ENCODE measurements at regions of chr13 and their contacts with region 1.

Region 1: GRCh38 chr13:39777527-39778061 is 122.1 kb downstream of the COG6 start:
- DNase-seq: no peak
- H3K4me3 Mint-ChIP-seq: no peak overlapping the region
- H3K27ac Mint-ChIP-seq: peak overlapping the region; percentile 86
- H3K4me1 Mint-ChIP-seq: peaks cover 50% of the 10 kb centered on the region
- H3K27me3 Mint-ChIP-seq: no peaks in the 10 kb centered on the region

Region 2: GRCh38 chr13:39684531-39685137 is 93.0 kb before region 1 on chr13:
- intact Hi-C with region 1: loop called (anchors 1 kb)
- DNase-seq: no peak
- H3K4me3 Mint-ChIP-seq: no peak overlapping the region
- H3K27ac Mint-ChIP-seq: no peak overlapping the region
- H3K4me1 Mint-ChIP-seq: peaks cover 27% of the 10 kb centered on the region
- H3K27me3 Mint-ChIP-seq: no peaks in the 10 kb centered on the region

Region 3: DNA sequence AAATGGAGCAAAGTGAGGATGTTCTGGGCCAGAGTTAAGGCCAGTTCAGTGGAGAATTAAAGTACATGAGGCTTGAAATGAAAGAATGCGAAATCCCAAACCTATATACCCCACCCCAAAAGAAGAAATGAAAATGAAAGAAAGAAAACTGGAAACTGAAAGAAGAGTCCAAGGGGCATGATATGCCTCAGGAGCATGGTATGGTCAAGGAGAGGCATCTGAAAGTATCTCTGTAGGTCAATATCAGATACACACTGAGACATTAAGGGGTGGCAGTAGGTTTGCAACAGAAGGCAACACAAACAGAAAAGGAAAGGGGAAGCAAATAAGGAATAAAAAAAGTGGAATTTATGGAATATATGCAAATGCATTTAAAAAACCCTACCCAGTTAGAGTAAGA is 44.4 kb after region 1 on chr13:
- intact Hi-C with region 1: loop called (anchors 1 kb)
- DNase-seq: no peak
- H3K4me3 Mint-ChIP-seq: no peak overlapping the region
- H3K27ac Mint-ChIP-seq: no peak overlapping the region
- H3K4me1 Mint-ChIP-seq: peaks cover 21% of the 10 kb centered on the region
- H3K27me3 Mint-ChIP-seq: no peaks in the 10 kb centered on the region

Region 4: GRCh38 chr13:39930544-39931444 is 153.2 kb after region 1 on chr13:
- intact Hi-C with region 1: loop called (anchors 2 kb)
- DNase-seq: no peak
- H3K4me3 Mint-ChIP-seq: no peak overlapping the region
- H3K27ac Mint-ChIP-seq: peak overlapping the region; percentile 48
- H3K4me1 Mint-ChIP-seq: peaks cover 24% of the 10 kb centered on the region
- H3K27me3 Mint-ChIP-seq: no peaks in the 10 kb centered on the region

Region 5: DNA sequence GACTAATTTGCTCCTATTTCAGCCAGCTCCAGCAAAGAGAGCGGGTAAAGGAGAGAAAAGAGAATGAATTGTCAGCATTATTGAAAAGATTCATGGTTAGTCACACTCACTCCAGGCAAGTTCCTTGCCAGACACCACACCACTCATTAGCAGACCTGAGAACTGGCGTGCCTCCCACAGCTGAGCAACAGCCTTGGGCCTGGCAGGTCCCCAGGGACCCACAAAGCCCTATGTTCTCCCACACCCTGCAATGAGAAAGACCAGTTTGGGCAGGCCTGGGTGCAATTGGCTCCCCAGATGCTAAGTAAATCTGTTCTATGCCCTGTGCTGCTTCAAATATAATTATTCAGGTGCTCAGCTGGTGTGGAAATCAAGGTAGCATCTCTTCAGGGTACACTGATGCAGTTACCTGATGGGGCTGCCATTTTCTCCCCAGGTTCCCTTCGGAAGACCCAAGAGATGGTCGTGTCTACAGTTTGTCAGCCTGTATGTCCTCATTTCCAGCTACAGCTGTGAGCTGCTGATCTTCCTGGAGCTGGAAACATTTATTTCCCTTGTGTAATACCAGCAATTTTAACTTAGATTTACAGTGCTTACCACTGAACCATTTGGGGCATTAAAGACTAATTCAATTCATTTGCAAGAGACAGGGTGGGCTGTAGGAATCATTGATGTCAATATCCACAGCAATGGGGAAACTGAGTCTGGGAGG is 282.9 kb after region 1 on chr13:
- intact Hi-C with region 1: loop called (anchors 2 kb)
- DNase-seq: no peak
- H3K4me3 Mint-ChIP-seq: no peak overlapping the region
- H3K27ac Mint-ChIP-seq: peak overlapping the region; percentile 56
- H3K4me1 Mint-ChIP-seq: peaks cover 38% of the 10 kb centered on the region
- H3K27me3 Mint-ChIP-seq: no peaks in the 10 kb centered on the region

Region 6: DNA sequence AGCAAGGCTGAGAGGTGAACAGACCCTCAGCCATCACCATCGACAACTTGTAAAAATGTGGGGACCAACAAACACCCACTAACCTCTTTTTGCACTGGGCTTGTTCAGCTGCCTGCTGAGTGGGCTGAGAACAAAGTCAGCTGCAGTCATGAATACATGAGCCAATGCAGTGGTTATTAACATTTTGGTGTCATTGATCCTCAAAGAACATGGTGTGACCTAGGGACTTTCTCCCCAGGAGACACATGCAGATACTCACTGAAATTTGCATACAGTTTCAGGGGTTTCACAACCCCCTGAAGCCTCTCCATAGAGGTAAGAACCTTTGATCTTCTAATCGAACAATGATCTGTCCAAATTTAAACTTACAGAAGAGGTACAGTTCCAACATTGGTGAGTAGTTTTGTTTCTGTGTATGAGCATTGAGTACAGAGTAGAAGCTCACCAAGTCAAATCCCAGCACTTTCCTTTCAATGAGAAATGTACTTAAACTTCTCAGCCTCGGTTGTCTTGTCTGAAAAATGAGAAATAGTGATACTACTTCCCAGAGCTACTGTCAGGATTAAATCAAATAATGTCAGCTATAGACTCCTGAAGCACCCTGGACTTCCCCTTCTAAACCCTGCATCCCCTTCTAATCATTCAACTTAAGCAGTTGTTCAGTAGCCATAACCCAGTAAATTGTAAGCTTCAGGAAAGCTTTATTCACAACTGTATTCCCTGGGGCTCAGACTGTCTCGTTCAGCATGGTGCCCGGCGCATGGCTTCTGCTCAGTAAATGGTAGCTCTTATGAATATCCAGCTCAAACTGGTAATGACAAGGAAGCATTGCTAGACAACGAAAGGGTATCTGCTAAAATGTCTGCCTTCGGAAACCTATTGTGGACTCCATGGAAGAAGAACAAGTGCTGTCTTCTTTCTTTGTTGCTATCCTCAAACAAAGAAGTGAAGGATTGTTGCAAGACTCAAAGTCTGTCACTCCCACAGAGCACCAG is 740.2 kb after region 1 on chr13:
- intact Hi-C with region 1: loop called (anchors 2 kb)
- DNase-seq: no peak
- H3K4me3 Mint-ChIP-seq: peak overlapping the region; percentile 42
- H3K27ac Mint-ChIP-seq: peak overlapping the region; percentile 81
- H3K4me1 Mint-ChIP-seq: peaks cover 57% of the 10 kb centered on the region
- H3K27me3 Mint-ChIP-seq: no peaks in the 10 kb centered on the region